ENCODE measurements at regions of chr2 and their contacts with region 1.

Region 1: DNA sequence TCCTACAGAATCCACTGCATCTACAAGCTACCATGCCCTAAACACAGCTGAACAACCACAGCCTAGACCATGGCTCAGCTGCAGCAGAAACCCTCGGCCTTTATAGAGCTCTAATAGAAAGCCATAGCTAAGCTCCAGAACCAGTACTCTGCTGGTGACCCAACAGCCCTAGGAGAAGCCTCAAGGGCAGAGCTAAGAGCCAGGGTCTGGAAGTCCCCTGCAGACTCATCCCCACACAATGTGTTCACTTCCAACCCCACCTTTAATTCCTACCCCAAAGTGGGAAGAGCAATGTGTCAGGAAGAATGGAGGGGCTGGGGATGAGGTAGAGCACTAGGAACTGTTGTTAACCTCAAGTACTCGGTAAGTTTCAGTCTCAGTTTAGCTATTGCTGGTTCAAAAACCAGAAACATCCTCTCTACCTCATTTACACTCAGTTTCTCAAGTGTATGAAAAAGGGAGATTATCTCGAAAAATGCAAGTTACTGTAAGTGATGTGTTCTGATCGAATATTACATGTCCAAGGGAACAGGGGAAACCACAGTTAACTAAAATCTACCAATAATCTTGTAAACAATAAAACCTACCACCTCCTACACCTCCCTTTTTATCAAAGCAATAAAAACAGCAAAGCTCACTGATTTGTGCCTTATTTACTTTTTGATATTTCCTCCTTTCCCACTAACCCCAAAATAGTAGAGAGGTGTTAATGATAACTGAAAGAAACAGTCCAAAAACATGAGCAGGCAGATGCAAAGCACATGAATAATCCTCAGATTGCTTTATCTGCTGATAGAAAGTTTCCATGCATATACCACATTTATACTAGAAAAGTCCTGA is 36.2 kb downstream of the THADA start:
- DNase-seq: peak; percentile 28
- H3K4me3 Mint-ChIP-seq: peak overlapping the region; percentile 24
- H3K27ac Mint-ChIP-seq: peak overlapping the region; percentile 93
- H3K4me1 Mint-ChIP-seq: peaks cover 38% of the 10 kb centered on the region
- H3K27me3 Mint-ChIP-seq: no peaks in the 10 kb centered on the region

Region 2: GRCh38 chr2:43149482-43150107 is 410.0 kb before region 1 on chr2:
- CTCF ChIA-PET with region 1: no interaction called
- intact Hi-C with region 1: loop called (anchors 5 kb)
- DNase-seq: peak; percentile 90
- H3K4me3 Mint-ChIP-seq: peak overlapping the region; percentile 26
- H3K27ac Mint-ChIP-seq: peak overlapping the region; percentile 62
- H3K4me1 Mint-ChIP-seq: peaks cover 70% of the 10 kb centered on the region
- H3K27me3 Mint-ChIP-seq: no peaks in the 10 kb centered on the region

Region 3: DNA sequence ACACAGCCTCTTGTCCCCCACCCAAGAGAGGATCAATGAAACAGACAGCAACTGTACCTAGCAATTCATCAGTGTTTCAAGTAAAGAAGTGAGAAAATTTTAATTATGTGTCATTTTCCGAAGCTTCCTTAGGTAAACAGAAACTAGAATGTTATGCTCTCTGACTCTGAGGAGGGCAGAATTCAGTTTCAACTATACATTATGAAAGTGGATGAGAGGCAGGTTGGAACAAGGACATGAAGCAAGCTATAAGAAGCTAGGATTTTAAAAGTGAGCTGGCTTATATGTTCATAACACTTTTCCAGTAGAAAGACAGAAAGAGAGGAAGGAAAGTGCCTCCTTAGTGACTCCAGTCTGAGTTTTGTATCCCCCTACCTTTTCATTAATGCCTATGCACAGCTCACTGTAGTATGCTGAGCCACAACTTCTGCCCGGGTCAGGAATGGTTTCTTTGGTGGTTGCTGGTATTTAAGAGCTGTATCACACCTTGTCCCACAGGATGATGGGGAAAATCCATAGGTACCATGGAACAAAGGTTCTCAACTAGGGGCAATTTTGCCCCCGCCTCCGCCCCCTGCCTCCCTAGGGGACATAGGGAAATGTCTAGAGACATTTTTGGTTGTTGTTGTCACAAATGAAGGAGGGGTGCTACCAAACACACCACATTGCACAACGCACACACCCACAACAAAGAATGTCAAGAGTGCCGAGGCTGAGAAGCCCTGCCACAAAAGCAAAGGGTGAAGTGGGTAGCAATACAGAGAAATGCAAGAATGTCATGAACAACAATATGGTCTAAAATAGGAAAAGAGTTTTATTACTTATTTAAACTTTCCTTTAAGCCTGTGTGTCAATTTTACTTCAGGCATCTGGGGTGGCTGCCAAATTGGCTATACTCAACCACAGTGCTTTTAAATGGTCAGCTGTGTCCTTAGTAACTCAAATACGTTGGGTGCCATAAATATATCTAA is 172.2 kb before region 1 on chr2:
- CTCF ChIA-PET with region 1: no interaction called
- intact Hi-C with region 1: loop called (anchors 1 kb)
- DNase-seq: no peak
- H3K4me3 Mint-ChIP-seq: no peak overlapping the region
- H3K27ac Mint-ChIP-seq: no peak overlapping the region
- H3K4me1 Mint-ChIP-seq: peaks cover 19% of the 10 kb centered on the region
- H3K27me3 Mint-ChIP-seq: no peaks in the 10 kb centered on the region

Region 4: GRCh38 chr2:43569921-43570320 is 10.3 kb after region 1 on chr2:
- CTCF ChIA-PET with region 1: interaction called, 4 read pairs
- intact Hi-C with region 1: loop called (anchors 1 kb)
- DNase-seq: peak; percentile 35
- H3K4me3 Mint-ChIP-seq: peak overlapping the region; percentile 11
- H3K27ac Mint-ChIP-seq: peak overlapping the region; percentile 83
- H3K4me1 Mint-ChIP-seq: peaks cover 36% of the 10 kb centered on the region
- H3K27me3 Mint-ChIP-seq: no peaks in the 10 kb centered on the region

Region 5: GRCh38 chr2:43595603-43596412 is 36.2 kb after region 1 on chr2 and contains the start of gene THADA:
- CTCF ChIA-PET with region 1: no interaction called
- intact Hi-C with region 1: loop called (anchors 2 kb)
- DNase-seq: peak; percentile 99
- H3K4me3 Mint-ChIP-seq: peak within 1 kb of the TSS; percentile 94
- H3K27ac Mint-ChIP-seq: peak within 1 kb of the TSS; percentile 96
- H3K4me1 Mint-ChIP-seq: peaks cover 31% of the 10 kb centered on the region
- H3K27me3 Mint-ChIP-seq: no peaks in the 10 kb centered on the region
- total RNA-seq, gene THADA: 28.6 to 31.5 TPM